WTC11 (cell line): ENCODE measurements at regions of chr2 and their contacts with region 1.

Region 1: DNA sequence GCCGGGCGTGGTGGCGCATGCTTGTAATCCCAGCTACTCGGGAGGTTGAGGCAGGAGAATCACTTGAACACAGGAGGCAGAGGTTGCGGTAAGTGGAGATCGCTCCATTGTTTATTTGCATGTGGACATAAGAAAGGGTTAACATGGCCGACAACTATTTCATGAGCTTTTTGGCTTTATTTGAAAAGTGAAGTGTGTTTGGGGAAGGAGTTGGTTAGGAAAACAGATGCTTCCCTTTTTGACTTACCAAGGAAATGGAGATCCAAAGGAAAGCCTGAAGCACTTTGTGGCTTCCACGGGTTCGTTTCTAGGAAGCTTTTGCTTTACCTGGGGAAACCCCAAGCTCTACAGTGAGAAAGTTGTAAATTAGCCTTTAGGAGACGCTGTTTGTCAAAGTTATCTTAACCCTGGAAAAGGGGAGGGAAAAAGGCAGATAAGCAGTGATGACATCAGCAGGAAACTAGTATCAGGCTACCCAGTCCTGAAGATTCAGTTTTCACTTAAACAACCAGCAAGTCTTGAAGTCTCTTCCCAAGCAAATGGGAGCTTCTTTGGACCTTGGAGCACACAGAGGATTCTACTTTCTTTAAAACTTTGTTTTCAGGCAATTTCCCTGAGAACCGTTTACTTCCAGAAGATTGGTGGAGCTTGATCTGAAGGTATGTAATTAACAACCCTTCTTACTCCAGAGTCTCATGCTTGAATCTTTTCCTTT is at the start of gene CASP10:
- DNase-seq: no peak
- ATAC-seq: peak; percentile 94
- H3K4me3 Mint-ChIP-seq: peak within 1 kb of the TSS; percentile 64
- H3K27ac Mint-ChIP-seq: peak within 1 kb of the TSS; percentile 90
- H3K4me1 Mint-ChIP-seq: peaks cover 15% of the 10 kb centered on the region
- H3K27me3 Mint-ChIP-seq: no peaks in the 10 kb centered on the region; the same call in none of the 2 replicates
- CTCF ChIP-seq: no peak
- total RNA-seq, gene CASP10: 2.8 to 2.9 TPM (median 2.8 TPM) in 3 replicates

Region 2: GRCh38 chr2:200901459-200902072 is 281.2 kb before region 1 on chr2:
- CTCF ChIA-PET with region 1: interaction called, 18 read pairs
- POLR2A ChIA-PET with region 1: no interaction called
- DNase-seq: peak; percentile 61
- ATAC-seq: peak; percentile 98
- H3K4me3 Mint-ChIP-seq: no peak overlapping the region
- H3K27ac Mint-ChIP-seq: peak overlapping the region; percentile 64; the same call in 1 of the 2 replicates
- H3K4me1 Mint-ChIP-seq: no peaks in the 10 kb centered on the region
- H3K27me3 Mint-ChIP-seq: no peaks in the 10 kb centered on the region
- CTCF ChIP-seq: peak; percentile 64

Region 3: GRCh38 chr2:201414099-201415023 is 231.6 kb after region 1 on chr2:
- CTCF ChIA-PET with region 1: no interaction called
- POLR2A ChIA-PET with region 1: no interaction called
- DNase-seq: no peak
- ATAC-seq: no peak
- H3K4me3 Mint-ChIP-seq: no peak overlapping the region
- H3K27ac Mint-ChIP-seq: no peak overlapping the region
- H3K4me1 Mint-ChIP-seq: peaks cover 7% of the 10 kb centered on the region
- H3K27me3 Mint-ChIP-seq: no peaks in the 10 kb centered on the region
- CTCF ChIP-seq: no peak